ENCODE measurements at regions of chr7 and their contacts with region 1.

Region 1: GRCh38 chr7:143240291-143241168 is 18.7 kb downstream of the TAS2R40 start:
- DNase-seq: peak; percentile 81
- H3K4me3 Mint-ChIP-seq: peak overlapping the region; percentile 45
- H3K27ac Mint-ChIP-seq: peak overlapping the region; percentile 73
- H3K4me1 Mint-ChIP-seq: peaks cover 30% of the 10 kb centered on the region
- H3K27me3 Mint-ChIP-seq: peaks cover 3% of the 10 kb centered on the region

Region 2: GRCh38 chr7:142943706-142944268 is 296.7 kb before region 1 on chr7:
- CTCF ChIA-PET with region 1: no interaction called
- POLR2A ChIA-PET with region 1: no interaction called
- intact Hi-C with region 1: no loop called
- DNase-seq: no peak
- H3K4me3 Mint-ChIP-seq: no peak overlapping the region
- H3K27ac Mint-ChIP-seq: no peak overlapping the region
- H3K4me1 Mint-ChIP-seq: no peaks in the 10 kb centered on the region
- H3K27me3 Mint-ChIP-seq: peaks cover 10% of the 10 kb centered on the region

Region 3: DNA sequence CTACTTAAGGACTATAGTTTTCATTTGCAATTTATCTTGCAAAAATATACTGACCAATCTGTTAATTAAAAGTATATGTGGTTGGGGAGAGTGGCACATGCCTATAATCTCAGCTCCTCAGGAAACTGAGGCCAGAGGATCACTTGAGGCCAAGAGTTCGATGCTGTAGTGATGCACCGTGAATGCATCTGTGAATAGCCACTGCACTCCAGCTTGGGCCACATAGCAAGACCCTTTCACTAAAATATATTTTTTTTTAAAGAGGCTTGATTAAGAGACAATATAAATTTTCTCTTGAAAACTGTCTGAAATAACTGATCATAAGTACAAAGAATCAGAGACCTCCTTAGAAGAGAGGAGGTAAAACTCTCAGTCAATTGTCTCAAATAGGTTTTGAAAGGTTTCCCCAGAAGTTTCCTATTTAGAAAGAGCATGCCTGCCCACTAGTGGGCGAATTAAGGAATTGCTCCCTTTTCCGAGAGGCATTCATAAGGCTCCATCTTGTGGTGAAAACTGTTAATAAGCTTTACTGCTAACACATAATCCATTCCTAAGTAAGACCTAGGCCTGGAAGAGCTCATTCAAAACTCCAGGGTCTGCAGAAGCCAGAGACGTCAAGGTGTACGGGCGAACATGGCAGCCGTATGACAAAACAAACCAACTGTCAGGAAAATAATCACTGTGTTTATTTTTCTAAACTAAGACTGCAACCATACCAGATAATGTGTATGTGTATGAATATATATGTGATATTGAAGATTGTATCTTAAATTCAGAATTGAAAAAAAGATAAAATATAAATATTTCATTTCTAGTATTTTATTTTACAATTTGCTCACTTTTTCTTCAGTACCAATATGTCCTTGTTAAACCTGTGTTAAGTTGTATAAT is 25.5 kb before region 1 on chr7:
- CTCF ChIA-PET with region 1: interaction called, 34 read pairs
- POLR2A ChIA-PET with region 1: no interaction called
- intact Hi-C with region 1: no loop called
- DNase-seq: peak; percentile 68
- H3K4me3 Mint-ChIP-seq: no peak overlapping the region
- H3K27ac Mint-ChIP-seq: no peak overlapping the region
- H3K4me1 Mint-ChIP-seq: no peaks in the 10 kb centered on the region
- H3K27me3 Mint-ChIP-seq: peaks cover 3% of the 10 kb centered on the region

Region 4: DNA sequence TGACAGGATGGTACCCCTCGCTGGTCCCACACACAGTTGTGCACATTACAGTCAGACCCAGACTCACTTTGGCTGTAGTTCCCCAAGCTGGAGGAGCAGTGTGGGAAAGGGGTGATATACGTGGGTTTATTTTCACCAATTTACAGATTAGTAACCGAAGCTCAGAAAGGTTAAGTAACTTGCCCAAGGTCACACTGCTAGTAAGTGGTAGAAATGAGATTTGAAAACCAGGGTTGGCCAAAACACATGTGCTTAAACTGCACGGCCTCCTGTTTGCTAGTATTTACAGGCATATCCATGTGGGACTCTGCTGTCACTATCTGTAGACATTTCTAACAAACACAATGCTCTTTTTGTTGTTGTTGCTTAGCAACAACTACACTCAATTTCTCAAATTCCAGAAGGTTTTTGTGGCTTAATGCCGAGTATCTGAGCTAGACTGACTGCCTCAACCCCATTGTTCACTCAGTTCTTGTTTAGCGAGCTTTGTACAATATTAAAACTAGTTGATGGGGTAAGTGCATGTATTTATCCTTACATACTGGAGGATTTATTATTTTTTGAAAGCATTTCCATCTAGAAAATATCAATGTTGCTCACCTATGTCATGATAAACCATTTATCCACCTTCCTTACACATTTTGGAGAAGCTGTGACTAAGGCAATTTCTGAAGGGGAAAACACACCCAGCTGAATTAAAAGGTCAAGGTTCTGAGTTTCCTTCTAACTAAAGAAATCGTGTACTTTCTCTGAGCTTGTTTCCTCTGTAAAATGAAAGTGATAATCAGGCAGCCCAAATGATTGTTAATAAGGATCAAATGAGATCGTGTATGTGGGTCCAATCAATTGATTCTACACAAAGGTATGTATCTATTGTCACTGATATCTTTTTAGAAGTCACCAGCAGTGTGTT is 38.9 kb after region 1 on chr7:
- CTCF ChIA-PET with region 1: interaction called, 30 read pairs
- POLR2A ChIA-PET with region 1: interaction called, 6 read pairs
- intact Hi-C with region 1: no loop called
- DNase-seq: no peak
- H3K4me3 Mint-ChIP-seq: peak overlapping the region; percentile 51
- H3K27ac Mint-ChIP-seq: peak overlapping the region; percentile 87
- H3K4me1 Mint-ChIP-seq: peaks cover 40% of the 10 kb centered on the region
- H3K27me3 Mint-ChIP-seq: no peaks in the 10 kb centered on the region

Region 5: DNA sequence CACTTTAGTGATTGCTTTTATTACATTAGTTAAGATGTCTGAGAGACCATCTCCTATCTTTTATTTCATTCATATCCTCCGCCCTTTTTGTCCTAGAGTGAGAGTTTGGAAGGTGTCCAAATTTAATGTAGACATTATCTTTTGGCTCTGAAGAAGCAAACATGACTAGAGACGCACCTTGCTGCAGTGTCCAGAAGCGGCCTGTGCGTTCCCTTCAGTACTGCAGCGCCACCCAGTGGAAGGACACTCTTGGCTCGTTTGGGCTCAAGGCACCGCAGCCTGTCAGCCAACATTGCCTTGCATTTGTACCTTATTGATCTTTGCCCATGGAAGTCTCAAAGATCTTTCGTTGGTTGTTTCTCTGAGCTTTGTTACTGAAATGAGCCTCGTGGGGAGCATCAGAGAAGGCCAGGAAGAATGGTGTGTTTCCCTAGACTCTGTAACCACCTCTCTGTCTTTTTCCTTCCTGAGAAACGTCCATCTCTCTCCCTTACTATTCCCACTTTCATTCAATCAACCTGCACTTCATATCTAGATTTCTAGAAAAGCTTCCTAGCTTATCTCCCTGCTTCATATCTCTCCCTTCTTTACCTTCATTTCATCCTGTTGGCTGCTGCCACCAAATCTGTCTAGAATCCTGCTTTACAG is 65.0 kb after region 1 on chr7:
- CTCF ChIA-PET with region 1: interaction called, 123 read pairs
- POLR2A ChIA-PET with region 1: interaction called, 6 read pairs
- intact Hi-C with region 1: loop called (anchors 1 kb)
- DNase-seq: peak; percentile 82
- H3K4me3 Mint-ChIP-seq: no peak overlapping the region
- H3K27ac Mint-ChIP-seq: peak overlapping the region; percentile 64
- H3K4me1 Mint-ChIP-seq: peaks cover 49% of the 10 kb centered on the region
- H3K27me3 Mint-ChIP-seq: no peaks in the 10 kb centered on the region

Region 6: DNA sequence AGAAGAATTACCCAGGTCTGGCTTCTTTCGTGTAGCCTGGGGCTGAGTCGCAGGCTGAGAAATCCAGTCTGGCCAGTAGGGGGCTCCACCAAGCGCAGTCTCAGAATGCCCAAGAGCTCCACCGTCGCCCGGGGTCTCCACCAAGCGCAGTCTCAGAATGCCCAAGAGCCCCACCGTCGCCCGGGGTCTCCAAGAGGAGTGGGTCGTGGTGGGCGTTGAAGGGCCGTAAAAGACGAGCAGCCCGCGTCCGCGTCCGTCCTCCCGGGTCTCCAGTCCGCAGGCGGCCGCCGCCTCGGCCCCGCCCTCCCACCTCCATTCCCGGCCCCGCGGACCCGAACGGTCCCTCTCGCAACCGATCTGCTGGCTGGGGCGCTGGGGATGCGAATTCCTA is 139.7 kb after region 1 on chr7:
- CTCF ChIA-PET with region 1: interaction called, 13 read pairs
- POLR2A ChIA-PET with region 1: no interaction called
- intact Hi-C with region 1: loop called (anchors 1 kb)
- DNase-seq: peak; percentile 93
- H3K4me3 Mint-ChIP-seq: peak overlapping the region; percentile 82
- H3K27ac Mint-ChIP-seq: peak overlapping the region; percentile 90
- H3K4me1 Mint-ChIP-seq: peaks cover 37% of the 10 kb centered on the region
- H3K27me3 Mint-ChIP-seq: no peaks in the 10 kb centered on the region

Region 7: DNA sequence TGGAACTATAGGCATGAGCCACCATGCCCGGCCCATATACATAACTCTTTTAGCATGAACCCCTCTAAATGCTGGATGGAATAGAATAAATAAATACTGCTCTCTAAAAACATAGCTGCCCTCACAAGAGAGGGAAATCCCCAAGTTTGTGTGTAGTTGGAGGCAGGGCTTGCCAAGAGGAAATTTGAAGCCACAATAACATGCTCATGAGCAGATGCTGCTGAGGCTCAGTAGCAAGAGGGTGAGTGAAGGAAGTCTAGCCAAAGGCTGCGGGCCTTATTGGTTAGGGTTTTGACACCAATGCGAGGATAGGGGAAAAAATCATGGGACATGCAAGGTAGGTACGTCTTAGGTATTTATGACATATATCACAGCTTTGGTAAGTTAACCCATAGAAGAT is 1578.0 kb after region 1 on chr7:
- CTCF ChIA-PET with region 1: no interaction called
- POLR2A ChIA-PET with region 1: no interaction called
- intact Hi-C with region 1: loop called (anchors 10 kb)
- DNase-seq: peak; percentile 66
- H3K4me3 Mint-ChIP-seq: no peak overlapping the region
- H3K27ac Mint-ChIP-seq: peak overlapping the region; percentile 90
- H3K4me1 Mint-ChIP-seq: peaks cover 68% of the 10 kb centered on the region
- H3K27me3 Mint-ChIP-seq: no peaks in the 10 kb centered on the region

Measured in activated CD4-positive, alpha-beta memory T cell treated with anti-CD3 and anti-CD28 coated beads for 36 hours (primary cell).